PC-3 (cell line): ENCODE measurements at regions of chr20 and their contacts with region 1.

Region 1: GRCh38 chr20:37449276-37449675 is 71.8 kb upstream of the NNAT start:
- DNase-seq: no peak
- ATAC-seq: no peak
- H3K4me3 ChIP-seq: no peak overlapping the region
- H3K27ac ChIP-seq: no peak overlapping the region
- H3K4me1 ChIP-seq: no peaks in the 10 kb centered on the region
- H3K27me3 ChIP-seq: peaks cover 4% of the 10 kb centered on the region; the same call in 1 of the 2 replicates
- CTCF ChIP-seq: no peak

Region 2: GRCh38 chr20:37490663-37491350 is 41.5 kb after region 1 on chr20:
- CTCF ChIA-PET with region 1: no interaction called
- POLR2A ChIA-PET with region 1: no interaction called
- intact Hi-C with region 1: no loop called
- DNase-seq: no peak
- ATAC-seq: no peak
- H3K4me3 ChIP-seq: no peak overlapping the region
- H3K27ac ChIP-seq: no peak overlapping the region
- H3K4me1 ChIP-seq: no peaks in the 10 kb centered on the region
- H3K27me3 ChIP-seq: no peaks in the 10 kb centered on the region
- CTCF ChIP-seq: no peak

Region 3: GRCh38 chr20:37501940-37502339 is 52.7 kb after region 1 on chr20:
- CTCF ChIA-PET with region 1: no interaction called
- POLR2A ChIA-PET with region 1: no interaction called
- intact Hi-C with region 1: loop called (anchors 10 kb)
- DNase-seq: peak; percentile 22
- ATAC-seq: peak; percentile 31; the same call in 1 of the 2 replicates
- H3K4me3 ChIP-seq: no peak overlapping the region
- H3K27ac ChIP-seq: no peak overlapping the region
- H3K4me1 ChIP-seq: peaks cover 11% of the 10 kb centered on the region
- H3K27me3 ChIP-seq: no peaks in the 10 kb centered on the region
- CTCF ChIP-seq: 0 out of 2 replicates have a peak, but pooled peaks have one; percentile 21